Mammary epithelial cell (primary cell): ENCODE measurements at regions of chr3 and their contacts with region 1.

Region 1: DNA sequence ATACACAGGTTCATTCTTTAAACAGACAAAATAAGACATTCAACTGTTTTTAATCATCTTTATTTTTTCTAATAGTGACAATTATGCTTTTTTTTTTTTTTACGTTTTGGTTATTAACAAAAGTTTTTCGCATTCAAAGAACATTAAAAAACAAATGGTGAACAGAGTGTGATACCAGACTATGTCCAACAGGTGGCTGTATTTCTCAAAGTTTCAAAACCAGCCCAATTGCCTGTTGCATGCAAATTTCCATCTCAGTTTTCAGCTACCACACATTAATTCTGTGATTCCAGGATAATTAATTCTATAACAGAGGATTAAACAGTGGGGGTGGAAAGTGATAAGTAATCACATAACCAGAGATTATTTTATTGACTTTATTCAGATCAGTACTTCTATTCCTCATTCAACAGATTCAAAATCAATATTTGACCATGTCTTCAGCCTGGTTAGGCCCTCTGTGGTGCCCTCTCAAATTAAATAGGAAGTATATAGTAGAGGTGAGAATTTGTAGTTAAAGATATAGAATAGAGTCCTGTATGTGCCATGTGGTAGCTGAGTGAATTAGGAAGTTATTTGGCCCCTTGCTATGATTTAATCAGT is 122.2 kb upstream of the DCBLD2 start:
- DNase-seq: peak; percentile 34
- H3K4me3 ChIP-seq: no peak overlapping the region
- H3K27ac ChIP-seq: no peak overlapping the region
- H3K4me1 ChIP-seq: no peaks in the 10 kb centered on the region
- H3K27me3 ChIP-seq: no peaks in the 10 kb centered on the region
- CTCF ChIP-seq: peak; percentile 56 to 68

Region 2: GRCh38 chr3:98645039-98645438 is 378.7 kb before region 1 on chr3:
- CTCF ChIA-PET with region 1: no interaction called
- dilution Hi-C with region 1: loop called (anchors 25 kb)
- in situ Hi-C with region 1: no loop called
- intact Hi-C with region 1: no loop called
- DNase-seq: peak; percentile 67
- H3K4me3 ChIP-seq: no peak overlapping the region
- H3K27ac ChIP-seq: no peak overlapping the region
- H3K4me1 ChIP-seq: no peaks in the 10 kb centered on the region
- H3K27me3 ChIP-seq: peaks cover 3% of the 10 kb centered on the region
- CTCF ChIP-seq: no peak

Region 3: GRCh38 chr3:99172736-99173657 is 149.3 kb after region 1 on chr3:
- CTCF ChIA-PET with region 1: interaction called, 5 read pairs
- dilution Hi-C with region 1: no loop called
- in situ Hi-C with region 1: loop called (anchors 5 to 10 kb)
- intact Hi-C with region 1: loop called (anchors 1 kb)
- DNase-seq: peak; percentile 60
- H3K4me3 ChIP-seq: no peak overlapping the region
- H3K27ac ChIP-seq: no peak overlapping the region
- H3K4me1 ChIP-seq: no peaks in the 10 kb centered on the region
- H3K27me3 ChIP-seq: no peaks in the 10 kb centered on the region
- CTCF ChIP-seq: peak; percentile 82 to 84